Activated B cell treated with CpG ODN at 0.5 μM for 24 hours (primary cell): ENCODE measurements at regions of chr7 and their contacts with region 1.

Region 1: GRCh38 chr7:17234398-17235031 is 63.9 kb upstream of the AHR start:
- DNase-seq: peak; percentile 17
- ATAC-seq: peak; percentile 86
- H3K4me3 Mint-ChIP-seq: peak overlapping the region; percentile 77
- H3K27ac Mint-ChIP-seq: peak overlapping the region; percentile 98
- H3K4me1 Mint-ChIP-seq: peaks cover 29% of the 10 kb centered on the region
- H3K27me3 Mint-ChIP-seq: no peaks in the 10 kb centered on the region
- CTCF ChIP-seq: no peak

Region 2: DNA sequence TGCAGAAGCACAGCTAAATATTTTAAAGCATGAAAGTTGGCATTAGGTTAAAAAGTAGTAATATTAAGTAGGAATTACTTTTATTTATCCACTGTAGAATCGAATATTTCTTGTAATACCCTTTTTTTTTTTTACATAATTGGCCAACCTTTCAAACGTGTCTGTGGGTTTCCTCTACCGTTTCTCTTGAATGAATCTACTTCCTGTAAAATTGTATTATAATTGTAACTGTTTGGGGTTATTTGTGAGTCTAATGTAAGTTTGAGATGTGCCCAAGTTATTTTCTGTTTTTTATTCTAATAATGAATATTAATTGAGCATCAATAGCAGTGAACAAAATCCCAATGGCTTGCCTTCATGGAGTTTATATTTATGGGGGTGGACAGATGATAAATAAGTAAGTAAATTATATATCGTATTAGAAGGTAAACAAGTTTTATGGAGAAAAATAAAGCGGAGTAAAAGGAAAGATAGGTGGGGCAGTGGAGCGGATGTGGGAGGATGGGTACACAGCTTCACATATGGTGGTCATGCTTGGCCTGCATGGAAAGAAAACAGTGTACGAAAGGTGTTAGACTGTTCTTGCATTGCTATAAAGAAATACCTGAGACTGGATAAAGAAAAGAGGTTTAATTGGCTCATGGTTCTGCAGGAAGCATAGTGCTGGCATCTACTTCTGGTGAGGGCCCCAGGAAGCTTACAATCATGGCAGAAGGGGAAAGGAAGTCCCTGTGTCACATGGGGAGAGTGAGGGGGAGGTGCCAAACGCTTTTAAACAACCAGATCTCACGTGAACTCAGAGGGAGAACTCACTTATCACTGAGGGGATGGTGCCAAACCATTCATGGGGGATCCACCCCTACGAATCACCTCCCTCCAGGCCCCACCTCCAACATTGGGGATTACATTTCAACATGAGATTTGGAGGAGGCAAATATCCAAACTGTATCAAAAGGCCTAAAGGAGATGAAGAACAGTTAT is 475.6 kb before region 1 on chr7:
- CTCF ChIA-PET with region 1: no interaction called
- POLR2A ChIA-PET with region 1: no interaction called
- intact Hi-C with region 1: loop called (anchors 1 kb)
- DNase-seq: no peak
- ATAC-seq: peak; percentile 40
- H3K4me3 Mint-ChIP-seq: peak overlapping the region; percentile 75
- H3K27ac Mint-ChIP-seq: peak overlapping the region; percentile 92
- H3K4me1 Mint-ChIP-seq: peaks cover 93% of the 10 kb centered on the region
- H3K27me3 Mint-ChIP-seq: no peaks in the 10 kb centered on the region
- CTCF ChIP-seq: no peak

Region 3: GRCh38 chr7:16836481-16836880 is 398.0 kb before region 1 on chr7:
- CTCF ChIA-PET with region 1: no interaction called
- POLR2A ChIA-PET with region 1: no interaction called
- intact Hi-C with region 1: no loop called
- DNase-seq: no peak
- ATAC-seq: no peak
- H3K4me3 Mint-ChIP-seq: no peak overlapping the region
- H3K27ac Mint-ChIP-seq: no peak overlapping the region
- H3K4me1 Mint-ChIP-seq: peaks cover 14% of the 10 kb centered on the region
- H3K27me3 Mint-ChIP-seq: peaks cover 3% of the 10 kb centered on the region
- CTCF ChIP-seq: no peak

Region 4: GRCh38 chr7:17009007-17009719 is 225.4 kb before region 1 on chr7:
- CTCF ChIA-PET with region 1: no interaction called
- POLR2A ChIA-PET with region 1: no interaction called
- intact Hi-C with region 1: loop called (anchors 1 kb)
- DNase-seq: no peak
- ATAC-seq: no peak
- H3K4me3 Mint-ChIP-seq: no peak overlapping the region
- H3K27ac Mint-ChIP-seq: no peak overlapping the region
- H3K4me1 Mint-ChIP-seq: peaks cover 6% of the 10 kb centered on the region
- H3K27me3 Mint-ChIP-seq: peaks cover 3% of the 10 kb centered on the region
- CTCF ChIP-seq: peak; percentile 29

Region 5: DNA sequence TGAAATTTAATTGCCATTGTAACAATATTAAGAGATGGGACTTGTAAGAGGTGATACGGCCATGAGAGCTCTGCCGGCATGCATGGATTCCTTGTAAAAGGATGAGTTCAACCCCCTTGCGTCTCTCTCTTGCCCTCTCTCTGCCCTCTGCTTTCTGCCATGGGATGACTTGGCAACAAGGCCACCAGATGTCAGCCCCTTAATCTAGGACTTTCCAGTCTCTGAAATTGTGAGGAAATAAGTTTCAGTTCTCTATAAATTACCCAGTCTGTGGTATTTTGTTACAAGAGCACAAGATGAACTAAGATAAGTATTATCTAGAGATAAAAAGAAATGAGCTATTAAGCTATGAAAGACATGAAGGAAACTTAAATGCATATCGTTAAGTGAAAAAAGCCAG is 81.8 kb before region 1 on chr7:
- CTCF ChIA-PET with region 1: interaction called, 4 read pairs
- POLR2A ChIA-PET with region 1: interaction called, 3 read pairs
- intact Hi-C with region 1: loop called (anchors 1 kb)
- DNase-seq: no peak
- ATAC-seq: peak; percentile 86
- H3K4me3 Mint-ChIP-seq: peak overlapping the region; percentile 62
- H3K27ac Mint-ChIP-seq: peak overlapping the region; percentile 63
- H3K4me1 Mint-ChIP-seq: peaks cover 40% of the 10 kb centered on the region
- H3K27me3 Mint-ChIP-seq: no peaks in the 10 kb centered on the region
- CTCF ChIP-seq: no peak

Region 6: GRCh38 chr7:17195576-17195975 is 38.9 kb before region 1 on chr7:
- CTCF ChIA-PET with region 1: no interaction called
- POLR2A ChIA-PET with region 1: no interaction called
- intact Hi-C with region 1: loop called (anchors 2 kb)
- DNase-seq: no peak
- ATAC-seq: peak; percentile 97
- H3K4me3 Mint-ChIP-seq: no peak overlapping the region
- H3K27ac Mint-ChIP-seq: no peak overlapping the region
- H3K4me1 Mint-ChIP-seq: peaks cover 22% of the 10 kb centered on the region
- H3K27me3 Mint-ChIP-seq: no peaks in the 10 kb centered on the region
- CTCF ChIP-seq: no peak

Region 7: GRCh38 chr7:17402628-17403278 is 168.2 kb after region 1 on chr7:
- CTCF ChIA-PET with region 1: no interaction called
- POLR2A ChIA-PET with region 1: no interaction called
- intact Hi-C with region 1: no loop called
- DNase-seq: no peak
- ATAC-seq: no peak
- H3K4me3 Mint-ChIP-seq: peak overlapping the region; percentile 60
- H3K27ac Mint-ChIP-seq: peak overlapping the region; percentile 78
- H3K4me1 Mint-ChIP-seq: peaks cover 22% of the 10 kb centered on the region
- H3K27me3 Mint-ChIP-seq: no peaks in the 10 kb centered on the region
- CTCF ChIP-seq: no peak

Region 8: GRCh38 chr7:17448486-17449423 is 214.2 kb after region 1 on chr7:
- CTCF ChIA-PET with region 1: no interaction called
- POLR2A ChIA-PET with region 1: no interaction called
- intact Hi-C with region 1: no loop called
- DNase-seq: no peak
- ATAC-seq: no peak
- H3K4me3 Mint-ChIP-seq: no peak overlapping the region
- H3K27ac Mint-ChIP-seq: no peak overlapping the region
- H3K4me1 Mint-ChIP-seq: no peaks in the 10 kb centered on the region
- H3K27me3 Mint-ChIP-seq: no peaks in the 10 kb centered on the region
- CTCF ChIP-seq: no peak

Region 9: DNA sequence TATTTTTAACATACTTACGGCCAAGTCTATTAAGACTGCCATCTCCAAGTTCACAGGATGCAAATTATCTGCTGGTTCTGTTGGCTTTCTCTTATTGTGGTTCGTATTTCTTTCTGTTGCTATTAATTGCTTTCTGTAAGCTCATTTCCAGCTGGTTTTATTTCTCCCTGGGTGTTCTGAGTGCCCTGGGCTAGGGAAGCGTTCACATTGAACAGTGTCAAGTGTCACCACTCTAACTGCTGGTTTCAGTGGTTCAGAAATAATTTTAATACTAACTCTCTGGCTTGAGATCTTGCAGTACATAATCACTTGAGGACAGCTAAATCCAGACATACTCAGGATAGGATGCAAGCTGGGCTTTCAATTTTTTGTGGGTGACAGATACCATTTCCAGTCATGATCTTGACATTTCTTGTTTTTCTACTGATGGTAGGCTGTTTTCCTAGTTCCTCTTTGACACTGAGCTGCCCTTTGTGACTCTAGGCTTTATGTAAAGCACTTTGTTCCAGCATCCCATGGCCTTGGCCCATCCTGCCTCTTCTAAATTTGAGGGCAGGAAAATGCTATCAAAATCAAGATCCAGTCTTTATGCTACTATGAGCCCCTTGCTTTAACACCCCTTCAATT is 588.1 kb after region 1 on chr7:
- CTCF ChIA-PET with region 1: no interaction called
- POLR2A ChIA-PET with region 1: no interaction called
- intact Hi-C with region 1: no loop called
- DNase-seq: no peak
- ATAC-seq: no peak
- H3K4me3 Mint-ChIP-seq: no peak overlapping the region
- H3K27ac Mint-ChIP-seq: no peak overlapping the region
- H3K4me1 Mint-ChIP-seq: no peaks in the 10 kb centered on the region
- H3K27me3 Mint-ChIP-seq: no peaks in the 10 kb centered on the region
- CTCF ChIP-seq: no peak